ENCODE measurements at regions of chr1 and their contacts with region 1.

Region 1: GRCh38 chr1:181033799-181034451 is at the start of gene MR1:
- DNase-seq: peak in 8 of 9 donors; percentile 32 to 92 (median 88)
- ATAC-seq: peak; percentile 97
- H3K4me3 ChIP-seq: peak within 1 kb of the TSS; percentile 77
- H3K4me3 Mint-ChIP-seq: peak within 1 kb of the TSS; percentile 84 to 99 (median 97)
- H3K27ac ChIP-seq: peak within 1 kb of the TSS; percentile 95
- H3K27ac Mint-ChIP-seq: peak within 1 kb of the TSS; percentile 95 to 100 (median 98)
- H3K4me1 ChIP-seq: peaks cover 32 to 42% of the 10 kb centered on the region in 2 donors
- H3K4me1 Mint-ChIP-seq: peaks cover 39 to 69% (median 61%) of the 10 kb centered on the region in 7 donors
- H3K27me3 ChIP-seq: no peaks in the 10 kb centered on the region
- H3K27me3 Mint-ChIP-seq: peaks cover 0 to 6% (median 0%) of the 10 kb centered on the region in 5 donors
- total RNA-seq, gene MR1: 19.8 to 35.8 (median 29.7) TPM

Region 2: DNA sequence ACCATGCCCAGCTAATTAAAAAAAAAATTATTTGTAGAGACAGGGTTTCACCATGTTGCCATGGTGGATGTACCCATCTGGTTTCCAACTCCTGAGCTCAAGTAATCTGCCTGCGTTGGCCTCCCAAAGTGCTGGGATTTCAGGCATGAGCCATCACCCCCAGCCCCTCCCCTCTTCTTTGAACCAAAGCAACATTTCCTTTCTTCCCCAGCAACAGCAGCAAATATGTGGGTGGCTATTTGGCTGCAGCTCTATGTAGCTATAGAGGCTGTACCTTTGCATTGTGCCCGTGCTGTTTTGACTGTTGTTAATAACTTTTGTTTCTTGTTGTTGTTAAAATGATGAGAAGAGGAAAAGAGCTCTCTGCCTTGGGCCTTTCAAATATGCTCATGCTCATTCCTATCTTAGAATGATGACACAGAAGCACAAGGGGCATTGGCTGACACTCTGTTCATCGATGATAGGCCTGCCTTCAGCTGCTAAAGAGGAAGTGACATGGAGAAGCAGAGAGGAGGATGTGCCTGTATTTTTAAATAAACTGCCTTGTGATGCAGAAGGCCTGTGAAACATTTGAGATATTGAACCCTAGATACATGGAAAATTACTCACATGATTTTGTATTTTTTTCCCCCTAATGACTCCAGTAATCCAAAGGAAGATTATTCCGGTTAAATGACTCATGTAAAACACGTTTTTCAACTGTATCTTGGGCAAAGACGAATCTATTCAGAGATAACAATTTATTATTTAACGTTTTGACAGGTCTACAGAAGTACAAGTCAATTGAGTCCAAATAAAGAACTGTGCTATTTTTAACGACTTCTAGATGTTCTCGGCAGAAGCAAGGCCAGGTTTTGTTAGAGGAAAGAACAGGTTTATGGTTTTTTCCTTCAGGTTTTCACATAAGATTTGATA is 422.7 kb before region 1 on chr1:
- CTCF ChIA-PET with region 1: no interaction called
- POLR2A ChIA-PET with region 1: no interaction called
- intact Hi-C with region 1: no loop called
- DNase-seq: peak in 2 of 9 donors; percentile 13 to 16
- ATAC-seq: peak; percentile 62
- H3K4me3 ChIP-seq: no peak overlapping the region
- H3K4me3 Mint-ChIP-seq: peak overlapping the region in 2 of 10 donors; percentile 32 to 35
- H3K27ac ChIP-seq: no peak overlapping the region
- H3K27ac Mint-ChIP-seq: peak overlapping the region in 4 of 9 donors; percentile 1 to 58 (median 9)
- H3K4me1 ChIP-seq: no peaks in the 10 kb centered on the region
- H3K4me1 Mint-ChIP-seq: peaks cover 6 to 13% (median 11%) of the 10 kb centered on the region in 7 donors
- H3K27me3 ChIP-seq: no peaks in the 10 kb centered on the region
- H3K27me3 Mint-ChIP-seq: no peaks in the 10 kb centered on the region

Region 3: DNA sequence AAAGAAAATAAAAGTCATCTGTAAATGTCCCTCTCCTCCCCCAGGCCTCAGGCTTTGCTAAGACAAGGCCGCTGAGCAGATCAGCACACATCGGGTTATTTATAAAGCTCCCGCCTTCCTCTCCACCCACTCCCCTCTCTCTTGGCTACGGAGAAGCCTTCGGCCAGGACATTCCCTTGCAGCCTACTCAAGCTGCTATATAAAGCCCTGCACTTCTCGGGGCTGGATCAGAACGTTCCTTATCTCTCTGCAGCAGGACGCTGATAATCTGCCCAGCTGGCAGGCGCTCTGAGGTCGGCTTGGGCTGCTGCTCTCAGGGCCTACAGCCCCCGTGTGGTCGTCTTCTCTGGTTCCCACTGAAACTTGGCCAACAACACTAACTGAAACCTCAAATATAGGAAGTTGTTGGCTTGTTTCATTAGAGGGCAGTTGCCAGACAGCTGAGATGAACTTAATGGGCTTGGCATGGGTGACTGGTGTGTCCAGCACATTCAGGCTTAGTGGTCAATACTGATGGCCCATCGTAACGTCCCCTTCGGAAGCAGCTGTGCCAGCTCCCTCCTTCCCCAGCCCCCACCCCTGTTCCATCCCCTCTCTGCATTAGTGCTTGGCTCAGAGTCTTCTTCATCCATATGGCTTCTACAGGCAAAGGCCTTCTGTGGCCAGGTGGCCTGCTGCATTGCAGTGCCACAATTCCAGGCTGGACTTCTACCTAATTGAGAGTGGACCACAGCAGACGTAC is 119.1 kb after region 1 on chr1:
- CTCF ChIA-PET with region 1: no interaction called
- POLR2A ChIA-PET with region 1: interaction called, 13 read pairs
- intact Hi-C with region 1: no loop called
- DNase-seq: no peak
- ATAC-seq: peak; percentile 58
- H3K4me3 ChIP-seq: no peak overlapping the region
- H3K4me3 Mint-ChIP-seq: no peak overlapping the region
- H3K27ac ChIP-seq: no peak overlapping the region
- H3K27ac Mint-ChIP-seq: peak overlapping the region in 1 of 9 donors; percentile 44
- H3K4me1 ChIP-seq: peaks cover 36 to 49% of the 10 kb centered on the region in 2 donors
- H3K4me1 Mint-ChIP-seq: peaks cover 37 to 75% (median 63%) of the 10 kb centered on the region in 7 donors
- H3K27me3 ChIP-seq: no peaks in the 10 kb centered on the region
- H3K27me3 Mint-ChIP-seq: peaks cover 0 to 27% (median 0%) of the 10 kb centered on the region in 5 donors